Lower leg skin (tissue), 4 donors: ENCODE measurements at regions of chr1 and their contacts with region 1.

Region 1: DNA sequence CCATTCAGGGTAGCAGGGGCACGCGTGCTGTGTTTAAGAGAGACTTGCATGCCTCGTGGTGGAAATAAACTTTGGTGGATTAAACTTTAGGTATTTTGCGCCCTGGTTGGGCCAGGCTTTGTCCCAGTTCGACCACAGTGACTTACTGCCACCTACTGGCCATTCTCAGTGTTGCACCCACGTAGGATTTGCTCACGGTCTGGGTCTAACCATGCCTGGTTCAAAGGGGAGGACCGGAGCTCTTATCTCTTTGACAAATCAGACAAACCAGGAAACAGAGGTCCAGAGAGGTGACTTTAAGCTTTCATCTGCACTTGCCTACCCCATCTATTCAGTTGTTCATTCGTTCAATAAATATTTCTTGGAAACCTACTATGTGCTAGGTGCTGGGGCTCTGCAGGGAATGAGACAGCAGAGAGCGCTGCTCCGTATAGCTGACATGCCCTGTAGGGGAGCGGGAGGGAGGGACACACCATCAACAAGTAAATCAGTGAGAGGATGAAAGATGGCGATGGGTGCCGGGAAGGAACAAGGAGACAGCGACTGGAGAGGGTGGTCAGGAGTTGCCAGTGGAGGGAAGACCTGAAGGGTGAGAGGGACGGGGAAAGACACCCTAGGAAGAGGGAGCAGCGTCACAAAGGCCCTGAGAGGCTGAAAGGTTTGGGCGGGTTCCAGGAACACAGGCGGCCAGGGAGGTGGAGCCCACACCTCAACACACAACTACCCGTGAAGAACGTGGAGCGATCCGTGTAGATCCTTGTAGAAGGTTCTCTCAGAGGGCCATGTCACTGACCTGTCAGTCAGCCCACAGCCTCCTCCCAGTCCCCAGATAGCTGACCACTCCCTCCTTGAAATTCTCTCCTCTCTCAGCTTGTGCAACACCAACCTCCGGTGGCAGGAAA is 27.2 kb upstream of the TINAGL1 start:
- DNase-seq: peak; percentile 88 to 97
- H3K4me3 ChIP-seq: no peak overlapping the region
- CTCF ChIP-seq: peak in 1 of 3 donors; percentile 88
- POLR2A ChIP-seq: no peak

Region 2: GRCh38 chr1:31413405-31414125 is 135.6 kb before region 1 on chr1:
- intact Hi-C with region 1: loop called (anchors 10 kb)
- DNase-seq: peak; percentile 61 to 95
- H3K4me3 ChIP-seq: peak overlapping the region; percentile 79
- CTCF ChIP-seq: no peak
- POLR2A ChIP-seq: no peak